HCT116 (cell line): ENCODE measurements at regions of chr15 and their contacts with region 1.

Region 1: GRCh38 chr15:82663186-82663600 is 16.0 kb upstream of the CPEB1 start:
- DNase-seq: no peak
- ATAC-seq: peak; percentile 53; the same call in 1 of the 2 replicates
- H3K4me3 ChIP-seq: no peak overlapping the region
- H3K27ac ChIP-seq: no peak overlapping the region
- H3K4me1 ChIP-seq: no peaks in the 10 kb centered on the region
- H3K27me3 ChIP-seq: peaks cover 32% of the 10 kb centered on the region
- CTCF ChIP-seq: no peak
- POLR2A ChIP-seq: no peak
- RAD21 ChIP-seq: no peak

Region 2: DNA sequence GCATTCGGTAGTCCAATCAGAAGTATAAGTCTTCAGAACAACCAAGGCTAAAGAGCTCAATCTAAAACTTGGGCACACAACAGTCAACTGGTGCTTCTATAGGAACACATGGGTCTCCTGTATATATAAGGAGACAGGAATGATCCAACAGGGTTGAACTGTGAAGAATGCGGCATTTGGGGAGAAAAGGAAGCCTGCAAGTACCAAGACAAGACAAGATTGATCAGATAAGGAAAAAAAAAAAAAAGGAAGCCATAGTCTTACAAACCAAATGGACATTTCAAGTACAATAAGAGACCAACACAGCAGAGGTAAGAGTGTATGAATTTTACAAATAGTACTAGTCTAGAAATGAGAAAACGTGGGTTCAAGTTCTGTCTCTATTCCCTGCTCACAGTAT is 22.5 kb before region 1 on chr15:
- CTCF ChIA-PET with region 1: no interaction called
- POLR2A ChIA-PET with region 1: no interaction called
- RAD21 ChIA-PET with region 1: no interaction called
- intact Hi-C with region 1: no loop called
- DNase-seq: no peak
- ATAC-seq: no peak
- H3K4me3 ChIP-seq: no peak overlapping the region
- H3K27ac ChIP-seq: no peak overlapping the region
- H3K4me1 ChIP-seq: 0 out of 4 replicates have a peak, but pooled peaks cover 0 to 7% of the 10 kb centered on the region in 2 experiments
- H3K27me3 ChIP-seq: peaks cover 75% of the 10 kb centered on the region
- CTCF ChIP-seq: no peak
- POLR2A ChIP-seq: no peak
- RAD21 ChIP-seq: no peak

Region 3: GRCh38 chr15:82709421-82710207 is 46.4 kb after region 1 on chr15 and contains the start of gene AP3B2:
- CTCF ChIA-PET with region 1: no interaction called
- POLR2A ChIA-PET with region 1: no interaction called
- RAD21 ChIA-PET with region 1: no interaction called
- intact Hi-C with region 1: loop called (anchors 5 kb)
- DNase-seq: no peak
- ATAC-seq: peak; percentile 94
- H3K4me3 ChIP-seq: peak within 1 kb of the TSS; percentile 33 to 55
- H3K27ac ChIP-seq: no peak within 1 kb of the TSS
- H3K4me1 ChIP-seq: peaks cover 0 to 4% of the 10 kb centered on the region in 2 experiments; a peak in 1 of 4 replicates
- H3K27me3 ChIP-seq: no peaks in the 10 kb centered on the region
- CTCF ChIP-seq: no peak
- POLR2A ChIP-seq: no peak
- RAD21 ChIP-seq: no peak
- total RNA-seq, gene AP3B2: 0.07 TPM